CD8-positive, alpha-beta T cell (primary cell): ENCODE measurements at regions of chr1 and their contacts with region 1.

Region 1: GRCh38 chr1:11805447-11806306 is at the starts of genes CLCN6 and MTHFR:
- DNase-seq: peak; percentile 93 to 99 (median 97)
- ATAC-seq: peak; percentile 85
- H3K4me3 ChIP-seq: peak within 1 kb of the TSS; percentile 73 to 96
- H3K4me3 Mint-ChIP-seq: peak within 1 kb of the TSS; percentile 99
- H3K27ac ChIP-seq: peak within 1 kb of the TSS; percentile 80 to 86
- H3K27ac Mint-ChIP-seq: peak within 1 kb of the TSS; percentile 98
- H3K4me1 ChIP-seq: peaks cover 48% of the 10 kb centered on the region
- H3K4me1 Mint-ChIP-seq: peaks cover 63% of the 10 kb centered on the region
- H3K27me3 ChIP-seq: no peaks in the 10 kb centered on the region
- H3K27me3 Mint-ChIP-seq: no peaks in the 10 kb centered on the region
- CTCF ChIP-seq: no peak
- total RNA-seq, gene CLCN6: 14.8 to 18.5 TPM
- total RNA-seq, gene MTHFR: 27.3 to 27.5 TPM

Region 2: DNA sequence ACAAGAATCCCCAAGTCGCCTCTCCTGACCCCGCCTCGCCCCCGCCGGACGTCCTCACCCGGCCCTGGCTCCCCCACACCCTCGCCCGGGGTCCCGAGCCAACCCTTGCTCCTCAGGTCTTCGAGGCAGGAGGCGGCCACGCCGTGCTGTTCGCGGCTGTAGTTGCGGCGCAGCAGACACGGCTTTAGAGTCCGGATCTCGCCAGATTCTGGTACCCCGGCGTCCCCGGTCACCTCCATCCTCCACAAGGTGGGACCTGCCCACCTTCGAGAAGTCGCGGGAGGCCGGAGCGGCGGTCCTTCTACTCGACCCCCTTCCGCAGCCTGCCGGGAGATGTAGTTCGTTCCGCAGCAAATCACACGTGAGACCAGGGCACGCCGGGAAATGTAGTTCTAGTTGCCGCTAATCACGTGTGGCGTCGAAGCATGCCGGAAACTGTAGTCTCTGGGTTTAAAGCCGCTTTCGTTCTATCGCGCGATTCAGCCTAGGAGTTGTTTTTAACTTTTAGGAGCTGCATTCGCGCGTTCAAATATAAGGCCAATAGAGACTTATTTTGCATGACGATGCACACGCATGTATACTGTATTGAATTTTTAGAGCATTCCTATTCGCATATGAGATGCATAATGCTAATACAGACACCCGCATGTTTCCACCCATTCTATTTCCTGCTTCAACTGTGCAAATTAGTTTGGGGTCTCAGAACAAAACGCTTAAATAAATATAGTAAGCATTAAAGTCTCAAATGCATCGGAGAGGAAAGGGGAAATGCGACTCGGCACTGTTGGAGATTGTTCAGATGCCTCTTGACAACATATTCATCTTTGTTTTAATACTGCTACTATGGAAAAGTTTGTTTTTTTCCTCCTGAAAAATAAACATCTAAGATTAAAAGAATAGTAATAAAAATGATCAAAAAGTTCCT is 1333.2 kb before region 1 on chr1 and contains the start of gene DFFA:
- CTCF ChIA-PET with region 1: no interaction called
- POLR2A ChIA-PET with region 1: no interaction called
- intact Hi-C with region 1: loop called in 1 of 2 experiments (anchors 5 kb)
- DNase-seq: peak; percentile 83 to 96 (median 91)
- ATAC-seq: peak; percentile 75
- H3K4me3 ChIP-seq: peak within 1 kb of the TSS; percentile 62 to 81
- H3K4me3 Mint-ChIP-seq: peak within 1 kb of the TSS; percentile 92
- H3K27ac ChIP-seq: peak within 1 kb of the TSS; percentile 39 to 66
- H3K27ac Mint-ChIP-seq: peak within 1 kb of the TSS; percentile 90
- H3K4me1 ChIP-seq: peaks cover 34% of the 10 kb centered on the region
- H3K4me1 Mint-ChIP-seq: peaks cover 47% of the 10 kb centered on the region
- H3K27me3 ChIP-seq: no peaks in the 10 kb centered on the region
- H3K27me3 Mint-ChIP-seq: no peaks in the 10 kb centered on the region
- CTCF ChIP-seq: no peak
- total RNA-seq, gene DFFA: 10.0 to 10.4 TPM

Region 3: GRCh38 chr1:11262171-11263049 is 543.3 kb before region 1 on chr1 and contains the start of gene MTOR:
- CTCF ChIA-PET with region 1: no interaction called
- POLR2A ChIA-PET with region 1: no interaction called
- intact Hi-C with region 1: loop called (anchors 2 to 5 kb)
- DNase-seq: peak; percentile 92 to 100 (median 96)
- ATAC-seq: peak; percentile 97
- H3K4me3 ChIP-seq: peak within 1 kb of the TSS; percentile 85 to 90
- H3K4me3 Mint-ChIP-seq: peak within 1 kb of the TSS; percentile 81
- H3K27ac ChIP-seq: peak within 1 kb of the TSS; percentile 61 to 81
- H3K27ac Mint-ChIP-seq: peak within 1 kb of the TSS; percentile 89
- H3K4me1 ChIP-seq: peaks cover 12% of the 10 kb centered on the region
- H3K4me1 Mint-ChIP-seq: peaks cover 20% of the 10 kb centered on the region
- H3K27me3 ChIP-seq: no peaks in the 10 kb centered on the region
- H3K27me3 Mint-ChIP-seq: no peaks in the 10 kb centered on the region
- CTCF ChIP-seq: no peak
- total RNA-seq, gene MTOR: 24.7 to 25.1 TPM

Region 4: GRCh38 chr1:11654137-11654938 is 151.3 kb before region 1 on chr1 and contains the starts of genes FBXO2 and FBXO44:
- CTCF ChIA-PET with region 1: interaction called, 3 read pairs
- POLR2A ChIA-PET with region 1: interaction called, 3 read pairs
- intact Hi-C with region 1: loop called (anchors 2 to 5 kb)
- DNase-seq: peak; percentile 32 to 77 (median 66)
- ATAC-seq: peak; percentile 78
- H3K4me3 ChIP-seq: peak within 1 kb of the TSS; percentile 59 to 66
- H3K4me3 Mint-ChIP-seq: peak within 1 kb of the TSS; percentile 77
- H3K27ac ChIP-seq: peak within 1 kb of the TSS in 1 of 2 experiments; percentile 42
- H3K27ac Mint-ChIP-seq: no peak within 1 kb of the TSS
- H3K4me1 ChIP-seq: peaks cover 32% of the 10 kb centered on the region
- H3K4me1 Mint-ChIP-seq: peaks cover 33% of the 10 kb centered on the region
- H3K27me3 ChIP-seq: no peaks in the 10 kb centered on the region
- H3K27me3 Mint-ChIP-seq: no peaks in the 10 kb centered on the region
- CTCF ChIP-seq: no peak
- total RNA-seq, gene FBXO2: 3.4 to 3.5 TPM
- total RNA-seq, gene FBXO44: 35.9 to 36.0 TPM

Region 5: DNA sequence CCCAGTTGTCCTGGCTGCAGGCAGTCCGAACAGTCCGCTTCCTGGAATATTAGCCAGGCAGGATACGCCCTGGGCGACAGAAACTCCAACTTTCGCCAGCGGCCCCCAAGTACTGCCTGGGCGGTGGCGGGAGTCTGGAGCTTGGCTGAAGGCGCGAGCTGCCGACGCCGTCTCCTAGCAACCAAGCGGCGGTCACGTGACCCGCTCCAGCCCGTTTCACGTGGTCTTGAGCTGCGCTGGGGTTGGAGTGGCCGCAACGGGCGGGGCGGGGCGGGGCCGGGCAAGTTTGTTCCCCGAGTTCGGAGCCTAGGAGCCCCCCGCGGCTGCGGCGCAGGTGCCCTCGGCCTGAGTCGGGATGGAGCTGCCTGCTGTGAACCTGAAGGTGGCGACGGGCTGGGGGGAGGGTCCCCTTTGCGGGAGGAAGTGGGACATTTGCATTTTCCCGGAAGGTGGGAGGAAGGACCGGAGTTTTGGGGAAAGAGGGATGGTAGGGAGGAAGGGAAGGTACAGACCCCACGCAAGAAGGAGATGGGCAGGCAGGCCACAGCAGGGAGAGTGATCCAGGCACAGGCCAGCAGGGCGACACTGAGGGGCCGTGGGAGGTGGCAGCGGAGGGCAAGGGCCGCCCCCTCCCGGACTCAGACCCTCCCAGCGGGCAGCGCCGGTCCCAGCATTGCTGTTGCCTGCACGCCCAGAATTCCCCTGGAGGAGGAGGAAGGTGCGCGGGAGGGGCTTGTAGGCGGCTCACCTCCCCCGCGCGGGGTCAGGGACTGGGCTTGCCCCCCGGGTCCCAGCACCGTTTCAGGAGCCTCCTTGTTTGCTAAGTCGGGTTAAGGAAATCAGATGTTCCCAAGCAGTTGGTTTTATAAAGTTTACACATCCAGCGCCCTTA is 69.6 kb before region 1 on chr1 and contains the start of gene AGTRAP:
- CTCF ChIA-PET with region 1: interaction called, 3 read pairs
- POLR2A ChIA-PET with region 1: interaction called, 5 read pairs
- intact Hi-C with region 1: loop called (anchors 1 to 2 kb)
- DNase-seq: peak; percentile 74 to 94 (median 86)
- ATAC-seq: peak; percentile 65
- H3K4me3 ChIP-seq: peak within 1 kb of the TSS; percentile 87 to 90
- H3K4me3 Mint-ChIP-seq: peak within 1 kb of the TSS; percentile 91
- H3K27ac ChIP-seq: peak within 1 kb of the TSS; percentile 50 to 74
- H3K27ac Mint-ChIP-seq: peak within 1 kb of the TSS; percentile 65
- H3K4me1 ChIP-seq: peaks cover 50% of the 10 kb centered on the region
- H3K4me1 Mint-ChIP-seq: peaks cover 69% of the 10 kb centered on the region
- H3K27me3 ChIP-seq: no peaks in the 10 kb centered on the region
- H3K27me3 Mint-ChIP-seq: no peaks in the 10 kb centered on the region
- CTCF ChIP-seq: no peak
- total RNA-seq, gene AGTRAP: 10.4 to 10.9 TPM

Region 6: DNA sequence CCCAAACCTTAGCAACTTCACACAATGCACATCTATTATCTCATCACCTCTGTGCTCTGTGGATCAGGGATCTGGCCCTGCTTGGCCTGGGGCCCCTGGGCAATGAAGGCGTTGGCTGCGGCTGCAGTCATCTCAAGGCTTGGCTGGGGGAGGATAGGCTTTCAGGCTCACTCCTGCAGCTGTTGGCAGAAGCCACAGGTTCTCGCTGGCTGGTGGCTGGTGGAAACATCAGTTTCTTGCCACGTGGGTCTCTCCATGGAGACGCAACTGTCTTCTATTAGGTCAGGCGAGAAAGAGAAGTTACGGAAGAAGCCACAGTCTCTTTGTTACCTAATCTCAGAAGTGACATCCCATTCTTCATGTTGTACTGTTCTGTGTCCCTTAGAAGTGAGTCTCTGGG is 45.5 kb after region 1 on chr1:
- CTCF ChIA-PET with region 1: no interaction called
- POLR2A ChIA-PET with region 1: no interaction called
- intact Hi-C with region 1: no loop called
- DNase-seq: no peak
- ATAC-seq: no peak
- H3K4me3 ChIP-seq: no peak overlapping the region
- H3K4me3 Mint-ChIP-seq: no peak overlapping the region
- H3K27ac ChIP-seq: no peak overlapping the region
- H3K27ac Mint-ChIP-seq: no peak overlapping the region
- H3K4me1 ChIP-seq: no peaks in the 10 kb centered on the region
- H3K4me1 Mint-ChIP-seq: no peaks in the 10 kb centered on the region
- H3K27me3 ChIP-seq: peaks cover 0 to 5% of the 10 kb centered on the region in 2 experiments
- H3K27me3 Mint-ChIP-seq: peaks cover 19% of the 10 kb centered on the region
- CTCF ChIP-seq: no peak

Region 7: DNA sequence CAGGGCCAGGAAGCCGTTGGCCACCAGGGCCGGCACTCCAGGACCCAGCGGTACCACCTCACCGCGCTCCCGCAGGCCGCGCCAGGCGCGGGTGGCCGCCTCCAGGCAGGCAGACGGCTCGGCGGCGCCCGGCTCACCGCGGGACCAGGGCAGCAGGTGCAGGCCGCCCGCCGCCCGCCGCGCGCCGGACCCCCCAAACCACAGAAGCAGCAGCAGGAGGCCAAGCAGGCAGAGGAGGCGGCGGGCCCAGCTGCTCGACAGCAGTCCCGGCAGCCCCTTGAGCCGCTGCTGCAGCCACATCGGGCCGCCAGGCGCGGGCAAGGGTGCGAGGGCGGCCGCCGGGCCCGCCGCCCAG is 120.2 kb after region 1 on chr1:
- CTCF ChIA-PET with region 1: no interaction called
- POLR2A ChIA-PET with region 1: interaction called, 4 read pairs
- intact Hi-C with region 1: loop called in 1 of 2 experiments (anchors 1 kb)
- DNase-seq: peak in 2 of 9 experiments; percentile 12 to 20
- ATAC-seq: peak; percentile 34
- H3K4me3 ChIP-seq: peak overlapping the region in 1 of 2 experiments; percentile 26
- H3K4me3 Mint-ChIP-seq: peak overlapping the region; percentile 86
- H3K27ac ChIP-seq: no peak overlapping the region
- H3K27ac Mint-ChIP-seq: no peak overlapping the region
- H3K4me1 ChIP-seq: peaks cover 34% of the 10 kb centered on the region
- H3K4me1 Mint-ChIP-seq: peaks cover 29% of the 10 kb centered on the region
- H3K27me3 ChIP-seq: no peaks in the 10 kb centered on the region
- H3K27me3 Mint-ChIP-seq: no peaks in the 10 kb centered on the region
- CTCF ChIP-seq: no peak

Region 8: GRCh38 chr1:12063141-12064072 is 257.7 kb after region 1 on chr1 and contains the start of gene TNFRSF8:
- CTCF ChIA-PET with region 1: no interaction called
- POLR2A ChIA-PET with region 1: no interaction called
- intact Hi-C with region 1: no loop called
- DNase-seq: peak in 5 of 9 experiments; percentile 29 to 59 (median 44)
- ATAC-seq: peak; percentile 69
- H3K4me3 ChIP-seq: peak within 1 kb of the TSS; percentile 15 to 22
- H3K4me3 Mint-ChIP-seq: peak within 1 kb of the TSS; percentile 70
- H3K27ac ChIP-seq: no peak within 1 kb of the TSS
- H3K27ac Mint-ChIP-seq: no peak within 1 kb of the TSS
- H3K4me1 ChIP-seq: peaks cover 24% of the 10 kb centered on the region
- H3K4me1 Mint-ChIP-seq: peaks cover 31% of the 10 kb centered on the region
- H3K27me3 ChIP-seq: peaks cover 8 to 24% of the 10 kb centered on the region in 2 experiments
- H3K27me3 Mint-ChIP-seq: peaks cover 40% of the 10 kb centered on the region
- CTCF ChIP-seq: no peak
- total RNA-seq, gene TNFRSF8: not detected